Common myeloid progenitor, CD34-positive (primary cell): ENCODE measurements at regions of chr6 and their contacts with region 1.

Region 1: GRCh38 chr6:56570413-56571359 is 72.0 kb downstream of the DST start:
- DNase-seq: peak; percentile 26 to 46 (median 34)
- H3K4me3 ChIP-seq: no peak overlapping the region
- H3K27ac ChIP-seq: no peak overlapping the region
- H3K4me1 ChIP-seq: no peaks in the 10 kb centered on the region
- H3K27me3 ChIP-seq: no peaks in the 10 kb centered on the region

Region 2: GRCh38 chr6:56353860-56354259 is 216.8 kb before region 1 on chr6:
- CTCF ChIA-PET with region 1: interaction called, 11 read pairs
- POLR2A ChIA-PET with region 1: no interaction called
- DNase-seq: peak in 1 of 3 donors; percentile 7
- H3K4me3 ChIP-seq: no peak overlapping the region
- H3K27ac ChIP-seq: no peak overlapping the region
- H3K4me1 ChIP-seq: peaks cover 0 to 3% (median 0%) of the 10 kb centered on the region in 4 experiments
- H3K27me3 ChIP-seq: no peaks in the 10 kb centered on the region

Region 3: GRCh38 chr6:56359201-56359899 is 211.3 kb before region 1 on chr6:
- CTCF ChIA-PET with region 1: interaction called, 11 read pairs
- POLR2A ChIA-PET with region 1: no interaction called
- DNase-seq: peak; percentile 75 to 89 (median 85)
- H3K4me3 ChIP-seq: no peak overlapping the region
- H3K27ac ChIP-seq: no peak overlapping the region
- H3K4me1 ChIP-seq: no peaks in the 10 kb centered on the region
- H3K27me3 ChIP-seq: no peaks in the 10 kb centered on the region

Region 4: DNA sequence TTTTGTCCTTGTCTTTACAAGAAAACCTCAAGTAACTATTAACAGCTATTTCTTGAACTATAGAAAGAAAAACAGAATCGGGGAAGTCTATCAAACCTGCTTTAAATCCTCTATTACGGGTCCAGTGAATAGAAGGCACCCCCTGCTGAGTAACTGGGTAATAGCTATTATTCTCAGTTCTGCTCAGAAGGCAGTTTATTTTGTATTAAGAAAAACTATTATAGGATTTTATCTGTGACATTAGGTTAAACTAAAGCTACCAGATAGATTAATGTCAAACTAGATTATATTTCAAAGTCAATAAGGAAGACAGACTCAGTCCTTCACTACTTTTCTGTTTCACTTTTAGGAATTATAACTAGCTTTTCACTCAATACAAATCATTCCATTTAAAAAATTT is 21.7 kb before region 1 on chr6:
- CTCF ChIA-PET with region 1: interaction called, 11 read pairs
- POLR2A ChIA-PET with region 1: no interaction called
- DNase-seq: peak; percentile 21 to 45 (median 41)
- H3K4me3 ChIP-seq: no peak overlapping the region
- H3K27ac ChIP-seq: no peak overlapping the region
- H3K4me1 ChIP-seq: no peaks in the 10 kb centered on the region
- H3K27me3 ChIP-seq: no peaks in the 10 kb centered on the region

Region 5: DNA sequence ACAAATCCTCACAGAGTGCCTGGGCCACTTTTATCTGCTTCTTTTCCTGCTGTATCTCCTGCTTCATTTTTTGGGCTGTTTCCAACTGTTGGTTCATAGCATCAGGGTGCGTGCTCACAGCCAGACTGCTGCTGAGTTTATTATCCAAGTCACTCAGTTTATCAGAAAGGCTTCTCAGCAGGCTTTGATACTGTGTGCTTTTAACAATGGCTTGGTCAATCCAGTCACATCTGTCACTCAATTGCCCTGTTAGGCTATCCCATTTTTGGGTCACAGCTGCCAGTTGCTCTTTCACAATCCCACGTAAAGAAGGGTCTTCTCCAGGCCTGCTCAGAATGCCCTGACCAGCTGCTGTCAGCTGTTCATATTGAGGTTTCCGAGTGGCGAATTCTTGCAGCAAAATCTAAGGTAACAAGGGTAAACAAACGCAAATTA is 15.2 kb before region 1 on chr6:
- CTCF ChIA-PET with region 1: interaction called, 10 read pairs
- POLR2A ChIA-PET with region 1: no interaction called
- DNase-seq: no peak
- H3K4me3 ChIP-seq: no peak overlapping the region
- H3K27ac ChIP-seq: no peak overlapping the region
- H3K4me1 ChIP-seq: no peaks in the 10 kb centered on the region
- H3K27me3 ChIP-seq: no peaks in the 10 kb centered on the region

Region 6: DNA sequence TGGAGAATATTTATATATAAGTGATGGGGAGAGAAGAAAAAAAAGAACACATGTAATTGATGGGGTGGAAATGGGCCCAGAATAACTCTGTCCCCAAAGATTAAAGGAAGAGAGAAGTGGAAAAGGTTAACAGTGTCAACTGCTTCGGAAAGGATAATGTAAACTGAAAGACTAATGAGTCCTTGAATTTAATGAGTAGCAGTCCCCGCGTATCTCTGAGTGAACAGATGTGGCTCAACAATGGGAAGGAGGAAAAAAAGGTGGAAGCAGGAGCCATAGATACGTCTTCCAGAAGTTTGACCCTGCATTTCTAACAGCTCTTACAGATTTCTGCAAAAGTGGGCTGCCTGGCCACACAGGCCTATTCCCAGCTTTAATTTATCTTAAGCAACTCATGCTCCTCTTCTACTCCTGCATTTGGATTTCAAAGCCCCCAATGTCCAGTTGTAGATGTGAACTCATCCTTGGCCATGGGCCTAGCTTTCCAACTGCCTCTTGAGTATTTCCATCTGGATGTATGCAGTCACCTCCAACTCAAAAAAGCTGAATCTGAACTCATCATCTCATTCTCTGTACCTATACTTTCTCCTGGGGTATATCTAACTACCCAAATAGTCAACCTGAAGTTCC is 10.7 kb after region 1 on chr6:
- CTCF ChIA-PET with region 1: interaction called, 16 read pairs
- POLR2A ChIA-PET with region 1: no interaction called
- DNase-seq: no peak
- H3K4me3 ChIP-seq: no peak overlapping the region
- H3K27ac ChIP-seq: no peak overlapping the region
- H3K4me1 ChIP-seq: no peaks in the 10 kb centered on the region
- H3K27me3 ChIP-seq: no peaks in the 10 kb centered on the region

Region 7: DNA sequence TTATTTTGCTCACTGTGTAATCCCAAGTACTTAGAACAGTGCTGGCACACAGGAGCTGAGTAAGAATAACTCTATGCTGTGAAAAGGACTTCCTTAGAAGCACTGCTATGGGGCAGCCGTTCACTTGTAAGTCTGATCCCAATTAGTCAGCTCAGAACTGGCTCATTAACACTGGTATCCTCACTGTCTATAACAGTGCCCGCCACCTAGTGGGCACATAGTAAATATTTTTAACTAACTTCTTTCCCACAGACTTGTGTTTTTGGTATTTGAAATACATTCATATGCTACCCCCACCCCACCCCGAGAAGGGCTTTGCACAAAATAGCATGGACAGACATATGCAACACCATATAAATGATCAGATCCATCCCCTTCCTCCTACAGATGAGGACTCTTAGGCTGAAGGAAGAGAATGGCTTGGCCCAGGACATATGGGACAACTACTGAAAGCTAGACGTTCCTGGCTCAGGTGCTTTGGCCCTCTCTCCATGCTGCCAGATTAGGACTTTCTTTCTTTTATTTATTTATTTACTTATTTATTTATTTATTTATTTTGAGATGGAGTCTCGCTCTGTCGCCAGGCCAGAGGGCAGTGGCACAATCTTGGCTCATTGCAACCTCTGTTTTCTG is 24.9 kb after region 1 on chr6:
- CTCF ChIA-PET with region 1: interaction called, 16 read pairs
- POLR2A ChIA-PET with region 1: no interaction called
- DNase-seq: peak; percentile 52 to 72 (median 70)
- H3K4me3 ChIP-seq: no peak overlapping the region
- H3K27ac ChIP-seq: no peak overlapping the region
- H3K4me1 ChIP-seq: no peaks in the 10 kb centered on the region
- H3K27me3 ChIP-seq: no peaks in the 10 kb centered on the region